Right cardiac atrium (tissue), 5 donors: ENCODE measurements at regions of chr21 and their contacts with region 1.

Region 1: GRCh38 chr21:43921979-43922945 is 57.2 kb downstream of the AGPAT3 start:
- DNase-seq: peak in 2 of 3 donors; percentile 53 to 68
- ATAC-seq: peak in 1 of 2 donors; percentile 1
- H3K4me3 ChIP-seq: no peak overlapping the region
- H3K27ac ChIP-seq: no peak overlapping the region
- H3K4me1 ChIP-seq: peaks cover 19% of the 10 kb centered on the region
- H3K27me3 ChIP-seq: no peaks in the 10 kb centered on the region

Region 2: DNA sequence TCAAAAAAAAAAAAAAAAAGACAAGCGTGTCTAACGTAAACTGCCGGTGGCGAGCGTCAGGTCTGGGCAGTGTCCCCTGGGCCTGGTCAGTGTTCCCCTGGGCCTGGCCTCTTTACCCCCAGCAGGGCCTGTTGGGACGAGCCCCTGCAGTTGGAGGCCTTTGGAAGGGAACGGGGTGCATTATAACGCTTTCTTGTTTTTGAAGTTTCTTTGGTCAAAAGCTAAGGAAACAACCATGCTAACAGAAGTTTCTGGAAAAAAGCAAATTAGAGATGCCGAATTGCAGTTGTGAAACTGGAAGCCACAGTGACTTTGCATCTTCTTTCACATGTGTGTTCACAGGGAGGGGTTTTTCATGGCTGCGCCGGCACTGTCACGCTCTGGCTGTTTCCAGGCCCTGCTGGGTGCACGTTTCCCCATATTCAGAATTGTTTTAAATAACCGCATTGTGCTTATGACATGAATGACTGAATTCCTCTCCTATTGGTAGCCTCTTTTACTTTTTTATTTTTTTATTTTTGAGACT is 116.9 kb before region 1 on chr21:
- intact Hi-C with region 1: loop called in 1 of 4 experiments (anchors 10 kb)
- DNase-seq: peak in 2 of 3 donors; percentile 37 to 41
- ATAC-seq: no peak
- H3K4me3 ChIP-seq: no peak overlapping the region
- H3K27ac ChIP-seq: no peak overlapping the region
- H3K4me1 ChIP-seq: no peaks in the 10 kb centered on the region
- H3K27me3 ChIP-seq: no peaks in the 10 kb centered on the region

Region 3: GRCh38 chr21:43816611-43817478 is 105.4 kb before region 1 on chr21:
- intact Hi-C with region 1: no loop called
- DNase-seq: peak in 2 of 3 donors; percentile 37 to 48
- ATAC-seq: no peak
- H3K4me3 ChIP-seq: no peak overlapping the region
- H3K27ac ChIP-seq: no peak overlapping the region
- H3K4me1 ChIP-seq: no peaks in the 10 kb centered on the region
- H3K27me3 ChIP-seq: no peaks in the 10 kb centered on the region

Region 4: GRCh38 chr21:43884012-43884860 is 38.0 kb before region 1 on chr21:
- intact Hi-C with region 1: loop called in 1 of 4 experiments (anchors 5 kb)
- DNase-seq: peak in 1 of 3 donors; percentile 73
- ATAC-seq: peak; percentile 66 to 76
- H3K4me3 ChIP-seq: no peak overlapping the region
- H3K27ac ChIP-seq: peak overlapping the region; percentile 26
- H3K4me1 ChIP-seq: peaks cover 16% of the 10 kb centered on the region
- H3K27me3 ChIP-seq: no peaks in the 10 kb centered on the region